ENCODE measurements at regions of chr6 and their contacts with region 1.

Region 1: GRCh38 chr6:73180763-73181619 is 44.3 kb downstream of the KHDC1L start:
- DNase-seq: no peak
- H3K4me3 Mint-ChIP-seq: no peak overlapping the region
- H3K27ac Mint-ChIP-seq: no peak overlapping the region
- H3K4me1 Mint-ChIP-seq: peaks cover 4% of the 10 kb centered on the region
- H3K27me3 Mint-ChIP-seq: no peaks in the 10 kb centered on the region

Region 2: GRCh38 chr6:72616406-72617015 is 564.5 kb before region 1 on chr6:
- intact Hi-C with region 1: loop called (anchors 1 kb)
- DNase-seq: no peak
- H3K4me3 Mint-ChIP-seq: no peak overlapping the region
- H3K27ac Mint-ChIP-seq: no peak overlapping the region
- H3K4me1 Mint-ChIP-seq: peaks cover 33% of the 10 kb centered on the region
- H3K27me3 Mint-ChIP-seq: peaks cover 5% of the 10 kb centered on the region

Region 3: DNA sequence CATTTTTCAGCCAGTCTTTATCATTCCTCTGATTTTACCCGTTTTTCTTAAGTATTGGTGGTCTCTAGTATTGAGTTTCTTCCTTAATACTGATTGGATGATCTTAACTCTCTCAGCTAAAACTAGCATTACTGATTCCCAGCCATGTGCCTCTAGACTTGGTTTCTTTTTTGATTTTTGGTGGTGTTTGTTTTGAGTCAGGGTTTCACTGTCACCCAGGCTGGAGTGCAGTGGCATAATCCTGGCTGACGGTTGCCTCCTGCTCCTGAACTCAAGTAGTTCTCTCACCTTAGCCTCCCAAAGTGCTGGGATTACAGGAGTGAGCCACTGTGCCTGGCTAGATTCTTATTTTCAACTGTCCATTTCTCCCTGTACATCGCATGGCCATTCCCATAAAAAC is 148.2 kb after region 1 on chr6:
- intact Hi-C with region 1: loop called (anchors 1 kb)
- DNase-seq: no peak
- H3K4me3 Mint-ChIP-seq: no peak overlapping the region
- H3K27ac Mint-ChIP-seq: no peak overlapping the region
- H3K4me1 Mint-ChIP-seq: peaks cover 7% of the 10 kb centered on the region
- H3K27me3 Mint-ChIP-seq: peaks cover 24% of the 10 kb centered on the region

Measured in activated T-helper 1 cell treated with anti-CD3 and anti-CD28 coated beads, Interleukin-12 subunit alpha, Interleukin-12 subunit beta, Interleukin-2, Interleukin-4 antibody, amounts not matched to agents 30 ng/mL and 10 ng/mL and 1 ng/mL, durations not matched to agents 14 hours and 24 hours and 36 hours (primary cell).